ENCODE measurements at regions of chr1 and their contacts with region 1.

Region 1: DNA sequence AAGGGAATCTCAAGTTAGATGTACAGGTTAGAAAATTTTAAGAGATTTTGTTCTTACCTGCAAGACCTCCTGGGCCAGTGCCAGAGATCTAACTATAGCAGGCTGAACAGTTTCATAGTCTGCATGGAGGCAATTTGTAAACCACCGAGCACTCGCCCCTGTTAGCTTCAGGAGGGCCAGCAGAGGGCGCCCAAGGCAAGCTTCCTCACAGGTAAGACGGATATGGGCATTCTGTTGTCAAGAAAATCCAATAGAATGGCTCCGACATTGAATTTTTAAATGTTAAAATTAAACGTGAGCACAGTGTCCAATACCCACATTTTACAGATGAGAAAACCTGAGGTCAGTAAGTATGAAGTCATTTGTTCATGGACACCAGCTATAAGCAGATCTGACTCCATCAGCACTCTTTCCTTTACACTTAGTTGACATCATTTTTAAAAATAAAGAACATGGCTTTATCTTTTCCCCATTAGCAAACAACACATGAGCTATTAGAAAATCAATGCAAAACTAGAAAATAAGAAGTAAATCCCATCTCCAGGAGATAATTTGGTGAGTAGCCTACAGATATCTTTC is 2.2 kb downstream of the REG4 start:
- DNase-seq: peak; percentile 85
- ATAC-seq: peak; percentile 97
- H3K4me3 Mint-ChIP-seq: no peak overlapping the region
- H3K27ac Mint-ChIP-seq: no peak overlapping the region
- H3K4me1 Mint-ChIP-seq: peaks cover 4% of the 10 kb centered on the region
- H3K27me3 Mint-ChIP-seq: peaks cover 14% of the 10 kb centered on the region

Region 2: GRCh38 chr1:119743781-119744597 is 65.1 kb before region 1 on chr1:
- CTCF ChIA-PET with region 1: interaction called, 15 read pairs
- POLR2A ChIA-PET with region 1: no interaction called
- intact Hi-C with region 1: loop called in 1 of 2 experiments (anchors 2 kb)
- DNase-seq: peak; percentile 76
- ATAC-seq: peak; percentile 83
- H3K4me3 Mint-ChIP-seq: no peak overlapping the region
- H3K27ac Mint-ChIP-seq: no peak overlapping the region
- H3K4me1 Mint-ChIP-seq: peaks cover 13% of the 10 kb centered on the region
- H3K27me3 Mint-ChIP-seq: no peaks in the 10 kb centered on the region

Region 3: DNA sequence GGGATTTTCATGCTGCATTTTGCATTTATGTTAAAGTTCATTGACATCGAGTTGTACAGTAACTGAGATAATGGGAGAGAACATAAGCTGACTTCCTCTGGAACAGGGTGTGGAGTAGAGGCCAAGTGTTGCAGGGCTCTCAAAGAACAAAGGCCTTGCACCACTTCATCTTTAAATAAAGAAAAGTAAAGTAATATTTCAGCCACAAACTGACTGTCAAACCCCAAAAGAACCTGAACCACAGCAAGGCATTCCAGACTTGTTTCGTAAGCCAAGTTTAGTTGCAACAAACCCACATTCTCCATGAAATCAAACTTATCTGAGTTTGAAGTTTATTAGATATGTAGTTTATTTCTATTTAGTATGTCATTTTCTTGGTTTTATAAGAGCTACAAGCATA is 21.3 kb before region 1 on chr1:
- CTCF ChIA-PET with region 1: interaction called, 11 read pairs
- POLR2A ChIA-PET with region 1: interaction called, 3 read pairs
- intact Hi-C with region 1: no loop called
- DNase-seq: no peak
- ATAC-seq: no peak
- H3K4me3 Mint-ChIP-seq: no peak overlapping the region
- H3K27ac Mint-ChIP-seq: no peak overlapping the region
- H3K4me1 Mint-ChIP-seq: peaks cover 6% of the 10 kb centered on the region
- H3K27me3 Mint-ChIP-seq: peaks cover 5% of the 10 kb centered on the region

Region 4: GRCh38 chr1:119827010-119827409 is 17.9 kb after region 1 on chr1:
- CTCF ChIA-PET with region 1: interaction called, 9 read pairs
- POLR2A ChIA-PET with region 1: no interaction called
- intact Hi-C with region 1: loop called in 1 of 2 experiments (anchors 1 kb)
- DNase-seq: no peak
- ATAC-seq: no peak
- H3K4me3 Mint-ChIP-seq: no peak overlapping the region
- H3K27ac Mint-ChIP-seq: no peak overlapping the region
- H3K4me1 Mint-ChIP-seq: no peaks in the 10 kb centered on the region
- H3K27me3 Mint-ChIP-seq: peaks cover 7% of the 10 kb centered on the region